Heart right ventricle (tissue), 16 donors: ENCODE measurements at regions of chr10 and their contacts with region 1.

Region 1: GRCh38 chr10:7260412-7260900 is 150.4 kb downstream of the SFMBT2 start:
- DNase-seq: peak in 1 of 2 donors; percentile 82
- ATAC-seq: peak; percentile 91 to 96 (median 94)
- H3K4me3 ChIP-seq: no peak overlapping the region
- H3K27ac ChIP-seq: peak overlapping the region in 8 of 10 donors; percentile 54 to 73 (median 64)
- H3K4me1 ChIP-seq: peaks cover 7 to 67% (median 28%) of the 10 kb centered on the region in 9 donors
- H3K27me3 ChIP-seq: no peaks in the 10 kb centered on the region
- CTCF ChIP-seq: peak; percentile 64 to 89 (median 81)

Region 2: DNA sequence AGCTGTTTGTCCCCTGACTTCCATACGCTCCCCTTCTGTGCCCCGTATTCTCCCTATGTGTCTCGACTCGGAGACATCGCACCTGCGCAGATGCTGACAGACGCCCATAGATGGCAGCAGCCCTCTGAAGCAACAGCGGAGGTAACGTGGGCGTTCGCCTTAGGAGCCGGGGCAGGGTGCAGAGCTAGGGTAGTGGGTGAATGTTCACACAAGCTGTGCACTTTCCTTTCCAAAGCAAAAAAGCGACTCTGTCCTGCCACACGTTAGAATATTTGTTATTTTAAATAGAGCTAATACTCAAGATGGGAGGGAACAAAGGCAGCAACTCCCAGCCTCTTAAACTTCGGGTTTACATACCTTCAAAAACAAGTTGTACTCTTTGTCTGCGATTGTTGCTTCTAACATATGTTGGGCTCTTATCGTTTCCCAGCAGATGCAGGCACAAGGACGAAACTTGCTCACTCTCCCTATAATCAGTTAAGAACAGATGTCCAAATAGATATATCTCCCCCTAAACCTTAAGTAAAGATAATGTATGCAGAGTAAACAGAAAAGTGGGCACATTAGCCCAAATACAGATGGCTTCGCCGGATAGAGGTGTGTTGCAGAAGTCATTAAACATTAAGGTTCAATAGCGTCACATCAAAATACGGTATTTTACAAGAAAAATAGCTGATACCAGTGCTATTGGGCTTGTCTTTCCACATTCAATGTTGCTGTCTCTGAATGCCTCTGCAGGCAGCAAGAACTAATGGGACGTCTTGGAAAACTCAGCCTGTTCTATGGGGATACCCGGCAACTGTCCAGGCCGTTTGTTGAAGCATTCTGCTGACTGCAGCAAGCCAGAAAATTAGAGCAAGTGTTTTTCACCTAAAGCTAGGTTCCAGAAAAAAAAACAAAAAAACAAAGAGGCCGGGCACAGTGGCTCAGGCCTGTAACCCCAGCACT is 340.1 kb before region 1 on chr10:
- intact Hi-C with region 1: loop called in 1 of 10 experiments (anchors 10 kb)
- DNase-seq: peak; percentile 59 to 62
- ATAC-seq: peak; percentile 83 to 95 (median 90)
- H3K4me3 ChIP-seq: no peak overlapping the region
- H3K27ac ChIP-seq: peak overlapping the region in 1 of 10 donors; percentile 9
- H3K4me1 ChIP-seq: peaks cover 0 to 15% (median 5%) of the 10 kb centered on the region in 9 donors
- H3K27me3 ChIP-seq: peaks cover 0 to 3% (median 0%) of the 10 kb centered on the region in 7 donors
- CTCF ChIP-seq: peak; percentile 28 to 75 (median 65)

Region 3: GRCh38 chr10:7311256-7312178 is 51.1 kb after region 1 on chr10:
- intact Hi-C with region 1: loop called in 2 of 10 experiments (anchors 5 to 10 kb)
- DNase-seq: no peak
- ATAC-seq: peak in 1 of 8 donors; percentile 58
- H3K4me3 ChIP-seq: no peak overlapping the region
- H3K27ac ChIP-seq: no peak overlapping the region
- H3K4me1 ChIP-seq: peaks cover 0 to 13% (median 3%) of the 10 kb centered on the region in 9 donors
- H3K27me3 ChIP-seq: no peaks in the 10 kb centered on the region
- CTCF ChIP-seq: no peak

Region 4: GRCh38 chr10:7318836-7319235 is 58.4 kb after region 1 on chr10:
- intact Hi-C with region 1: loop called in 2 of 10 experiments (anchors 5 to 10 kb)
- DNase-seq: no peak
- ATAC-seq: peak in 6 of 8 donors; percentile 47 to 65 (median 61)
- H3K4me3 ChIP-seq: peak overlapping the region in 1 of 10 donors; percentile 3
- H3K27ac ChIP-seq: peak overlapping the region in 2 of 10 donors; percentile 0 to 8
- H3K4me1 ChIP-seq: peaks cover 0 to 31% (median 24%) of the 10 kb centered on the region in 9 donors
- H3K27me3 ChIP-seq: no peaks in the 10 kb centered on the region
- CTCF ChIP-seq: no peak

Region 5: GRCh38 chr10:7337431-7338171 is 77.1 kb after region 1 on chr10:
- intact Hi-C with region 1: loop called in 4 of 10 experiments (anchors 5 to 10 kb)
- DNase-seq: no peak
- ATAC-seq: peak in 2 of 8 donors; percentile 18 to 38
- H3K4me3 ChIP-seq: no peak overlapping the region
- H3K27ac ChIP-seq: peak overlapping the region in 6 of 10 donors; percentile 3 to 57 (median 32)
- H3K4me1 ChIP-seq: peaks cover 4 to 71% (median 47%) of the 10 kb centered on the region in 9 donors
- H3K27me3 ChIP-seq: no peaks in the 10 kb centered on the region
- CTCF ChIP-seq: no peak

Region 6: GRCh38 chr10:7345717-7346116 is 85.3 kb after region 1 on chr10:
- intact Hi-C with region 1: loop called in 4 of 10 experiments (anchors 5 kb)
- DNase-seq: peak in 1 of 2 donors; percentile 40
- ATAC-seq: peak; percentile 74 to 96 (median 87)
- H3K4me3 ChIP-seq: peak overlapping the region in 2 of 10 donors; percentile 5 to 6
- H3K27ac ChIP-seq: peak overlapping the region; percentile 30 to 83 (median 60)
- H3K4me1 ChIP-seq: peaks cover 4 to 31% (median 22%) of the 10 kb centered on the region in 9 donors
- H3K27me3 ChIP-seq: no peaks in the 10 kb centered on the region
- CTCF ChIP-seq: no peak